ENCODE measurements at regions of chr2 and their contacts with region 1.

Region 1: DNA sequence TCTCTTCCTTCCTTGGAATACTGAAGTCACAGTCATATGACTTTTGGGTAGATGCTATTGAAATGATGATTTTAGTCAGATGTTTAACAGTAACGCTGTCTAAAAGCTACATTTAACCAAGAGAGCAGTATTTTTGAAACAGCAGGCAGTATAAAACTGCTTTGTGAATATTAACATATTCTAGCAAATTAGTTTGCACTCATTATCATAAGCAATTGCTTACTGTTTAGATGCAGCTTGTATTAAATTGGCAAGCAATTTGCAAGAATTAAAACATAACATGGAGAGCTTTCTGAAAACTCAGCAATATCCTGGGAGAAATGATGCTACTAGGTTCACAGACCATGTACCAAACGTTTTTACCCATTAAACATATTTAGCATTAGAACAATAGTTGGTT is 776.0 kb downstream of the NRXN1 start:
- DNase-seq: no peak
- H3K4me3 ChIP-seq: no peak overlapping the region
- H3K27ac ChIP-seq: no peak overlapping the region
- H3K4me1 ChIP-seq: no peaks in the 10 kb centered on the region
- H3K27me3 ChIP-seq: no peaks in the 10 kb centered on the region
- CTCF ChIP-seq: no peak

Region 2: DNA sequence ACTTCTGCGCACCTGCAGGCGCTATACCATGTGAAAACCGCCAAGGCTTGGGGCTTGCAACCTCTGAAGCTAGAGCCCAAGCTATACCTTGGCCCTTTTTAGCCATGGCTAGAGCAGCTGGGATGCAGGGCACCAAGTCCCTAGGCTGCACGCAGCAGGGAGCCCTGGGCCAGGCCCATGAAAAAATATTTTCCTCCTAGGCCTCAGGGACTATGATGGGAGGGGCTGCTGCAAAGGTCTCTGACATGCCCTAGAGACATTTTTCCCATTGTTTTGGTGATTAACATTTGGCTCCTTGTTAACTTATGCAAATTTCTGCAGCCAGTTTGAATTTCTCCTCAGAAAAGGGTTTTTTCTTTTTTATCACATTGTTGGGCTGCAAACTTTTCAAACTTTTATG is 1443.6 kb before region 1 on chr2:
- CTCF ChIA-PET with region 1: no interaction called
- POLR2A ChIA-PET with region 1: no interaction called
- intact Hi-C with region 1: loop called (anchors 5 kb)
- DNase-seq: no peak
- H3K4me3 ChIP-seq: no peak overlapping the region
- H3K27ac ChIP-seq: no peak overlapping the region
- H3K4me1 ChIP-seq: no peaks in the 10 kb centered on the region
- H3K27me3 ChIP-seq: peaks cover 7% of the 10 kb centered on the region; the same call in 1 of the 2 replicates
- CTCF ChIP-seq: no peak

Region 3: GRCh38 chr2:50358586-50358985 is 102.7 kb after region 1 on chr2:
- CTCF ChIA-PET with region 1: no interaction called
- POLR2A ChIA-PET with region 1: no interaction called
- intact Hi-C with region 1: no loop called
- DNase-seq: no peak
- H3K4me3 ChIP-seq: no peak overlapping the region
- H3K27ac ChIP-seq: no peak overlapping the region
- H3K4me1 ChIP-seq: no peaks in the 10 kb centered on the region
- H3K27me3 ChIP-seq: 0 out of 2 replicates have a peak, but pooled peaks cover 5% of the 10 kb centered on the region
- CTCF ChIP-seq: no peak